Activated T-helper 1 cell treated with anti-CD3 and anti-CD28 coated beads, Interleukin-12 subunit alpha, Interleukin-12 subunit beta, Interleukin-2, Interleukin-4 antibody, amounts not matched to agents 30 ng/mL and 10 ng/mL and 1 ng/mL, durations not matched to agents 14 hours and 24 hours and 36 hours (primary cell): ENCODE measurements at regions of chr11 and their contacts with region 1.

Region 1: GRCh38 chr11:67482825-67483798 is at the start of gene AIP:
- DNase-seq: peak; percentile 98
- H3K4me3 Mint-ChIP-seq: peak within 1 kb of the TSS; percentile 94
- H3K27ac Mint-ChIP-seq: peak within 1 kb of the TSS; percentile 100
- H3K4me1 Mint-ChIP-seq: peaks cover 55% of the 10 kb centered on the region
- H3K27me3 Mint-ChIP-seq: peaks cover 4% of the 10 kb centered on the region
- total RNA-seq, gene AIP: 200 and 203 TPM in 2 replicates

Region 2: GRCh38 chr11:67265633-67266423 is 217.3 kb before region 1 on chr11:
- intact Hi-C with region 1: loop called (anchors 1 kb)
- DNase-seq: peak; percentile 76
- H3K4me3 Mint-ChIP-seq: peak overlapping the region; percentile 83
- H3K27ac Mint-ChIP-seq: peak overlapping the region; percentile 90
- H3K4me1 Mint-ChIP-seq: peaks cover 73% of the 10 kb centered on the region
- H3K27me3 Mint-ChIP-seq: no peaks in the 10 kb centered on the region

Region 3: GRCh38 chr11:67317205-67317887 is 165.8 kb before region 1 on chr11:
- intact Hi-C with region 1: loop called (anchors 1 kb)
- DNase-seq: peak; percentile 98
- H3K4me3 Mint-ChIP-seq: peak overlapping the region; percentile 94
- H3K27ac Mint-ChIP-seq: peak overlapping the region; percentile 100
- H3K4me1 Mint-ChIP-seq: peaks cover 39% of the 10 kb centered on the region
- H3K27me3 Mint-ChIP-seq: peaks cover 4% of the 10 kb centered on the region

Region 4: DNA sequence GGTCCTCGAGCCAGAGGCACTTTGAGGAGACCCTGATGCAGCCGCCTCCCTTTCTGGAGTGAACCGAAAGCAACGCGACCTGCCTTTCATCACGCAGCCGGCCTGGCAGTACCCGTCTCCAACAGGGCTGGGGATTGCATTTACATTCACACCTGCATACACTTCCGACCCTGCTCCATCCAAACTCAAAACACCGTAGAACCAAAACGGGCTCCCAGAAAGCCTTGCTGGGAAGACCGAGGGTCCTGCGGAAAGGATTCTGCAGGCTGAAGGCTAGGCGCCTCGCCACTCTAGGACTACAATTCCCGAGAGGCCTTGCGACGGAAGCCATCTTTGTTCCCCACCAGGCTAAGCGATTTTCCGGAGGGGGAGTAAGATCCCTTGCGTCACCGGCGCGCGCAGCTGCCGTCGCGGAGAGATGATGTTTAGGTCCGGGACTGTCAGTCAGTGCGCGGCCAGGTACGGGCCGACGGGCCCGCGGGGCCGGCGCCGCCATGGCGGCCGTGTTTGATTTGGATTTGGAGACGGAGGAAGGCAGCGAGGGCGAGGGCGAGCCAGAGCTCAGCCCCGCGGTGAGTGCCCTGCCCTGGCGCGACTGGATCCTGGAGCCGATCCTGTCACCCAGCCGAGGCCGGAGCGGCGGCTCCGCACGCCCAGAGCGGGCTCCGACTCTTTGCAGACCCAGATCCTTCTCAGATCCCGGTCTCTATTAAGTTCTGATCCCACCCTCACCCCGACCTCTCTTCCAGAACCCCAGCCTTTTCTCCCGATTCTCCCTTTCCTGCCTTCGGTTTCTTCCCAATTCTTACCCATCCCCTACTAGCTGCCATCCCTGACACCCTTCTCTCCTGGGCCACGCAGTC is 54.8 kb before region 1 on chr11 and contains the start of gene RPS6KB2:
- intact Hi-C with region 1: loop called (anchors 1 kb)
- DNase-seq: peak; percentile 98
- H3K4me3 Mint-ChIP-seq: peak within 1 kb of the TSS; percentile 98
- H3K27ac Mint-ChIP-seq: peak within 1 kb of the TSS; percentile 97
- H3K4me1 Mint-ChIP-seq: peaks cover 27% of the 10 kb centered on the region
- H3K27me3 Mint-ChIP-seq: no peaks in the 10 kb centered on the region
- total RNA-seq, gene RPS6KB2: 84.1 and 86.2 TPM in 2 replicates

Region 5: GRCh38 chr11:67468835-67469811 is 14.0 kb before region 1 on chr11 and contains the start of gene TMEM134:
- intact Hi-C with region 1: loop called (anchors 1 kb)
- DNase-seq: peak; percentile 88
- H3K4me3 Mint-ChIP-seq: peak within 1 kb of the TSS; percentile 91
- H3K27ac Mint-ChIP-seq: peak within 1 kb of the TSS; percentile 84
- H3K4me1 Mint-ChIP-seq: peaks cover 21% of the 10 kb centered on the region
- H3K27me3 Mint-ChIP-seq: no peaks in the 10 kb centered on the region
- total RNA-seq, gene TMEM134: 55.1 and 61.4 TPM in 2 replicates